ENCODE measurements at regions of chrX and their contacts with region 1.

Region 1: DNA sequence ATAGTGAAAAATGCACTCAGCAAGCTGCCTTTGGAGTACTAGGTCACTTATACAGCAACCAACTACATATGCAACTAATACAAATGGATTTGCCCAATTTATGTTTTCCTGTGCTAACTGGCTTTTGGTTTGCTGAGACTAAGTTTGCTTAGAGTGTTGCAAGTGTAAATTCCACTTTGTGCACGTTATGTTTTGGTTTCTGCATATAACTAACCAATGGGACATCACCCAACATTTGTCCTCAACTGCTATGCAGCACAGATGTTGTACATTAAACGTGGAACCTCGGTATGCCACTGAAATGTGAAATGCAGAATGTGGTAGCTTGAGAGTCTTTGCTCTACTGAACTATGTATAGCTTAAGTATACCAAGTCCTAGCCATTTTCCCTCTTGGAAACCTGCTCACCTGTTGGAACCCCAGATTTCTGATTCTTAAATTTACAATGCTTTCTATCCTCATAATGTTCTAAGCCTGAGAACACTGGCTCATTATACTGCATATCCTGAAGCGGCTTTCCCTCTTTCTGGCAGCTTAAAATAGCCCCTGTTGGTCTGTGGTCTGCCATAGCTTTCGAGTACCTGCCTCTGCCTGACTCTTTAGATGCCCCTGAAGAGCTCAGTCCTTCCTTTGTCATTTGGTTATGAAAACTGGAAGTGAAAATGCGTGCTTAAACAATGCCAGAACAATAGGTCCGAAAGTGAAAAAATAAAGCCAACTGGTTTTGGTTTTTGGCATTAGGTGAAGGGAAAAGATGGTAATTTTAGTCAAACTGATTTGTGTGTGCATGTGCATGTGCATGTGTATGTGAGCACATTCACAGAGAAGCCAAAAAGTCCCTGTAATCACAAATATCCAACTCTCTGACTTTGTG is 158.0 kb downstream of the SH2D1A start:
- DNase-seq: peak; percentile 36
- ATAC-seq: peak; percentile 96
- H3K4me3 ChIP-seq: no peak overlapping the region
- H3K27ac ChIP-seq: no peak overlapping the region
- H3K4me1 ChIP-seq: no peaks in the 10 kb centered on the region
- H3K27me3 ChIP-seq: no peaks in the 10 kb centered on the region; a peak in 1 of 4 replicates
- CTCF ChIP-seq: no peak
- EP300 ChIP-seq: peak in 1 of 2 experiments; percentile 60; a peak in 2 of 4 replicates
- POLR2A ChIP-seq: no peak
- RAD21 ChIP-seq: no peak

Region 2: GRCh38 chrX:124045109-124045508 is 459.2 kb before region 1 on chrX:
- CTCF ChIA-PET with region 1: no interaction called
- POLR2A ChIA-PET with region 1: no interaction called
- RAD21 ChIA-PET with region 1: no interaction called
- SMC1A ChIA-PET with region 1: no interaction called
- in situ Hi-C with region 1: no loop called
- intact Hi-C with region 1: no loop called
- DNase-seq: no peak
- ATAC-seq: no peak
- H3K4me3 ChIP-seq: no peak overlapping the region
- H3K27ac ChIP-seq: no peak overlapping the region
- H3K4me1 ChIP-seq: no peaks in the 10 kb centered on the region
- H3K27me3 ChIP-seq: no peaks in the 10 kb centered on the region
- CTCF ChIP-seq: no peak
- EP300 ChIP-seq: no peak
- POLR2A ChIP-seq: no peak
- RAD21 ChIP-seq: no peak

Region 3: DNA sequence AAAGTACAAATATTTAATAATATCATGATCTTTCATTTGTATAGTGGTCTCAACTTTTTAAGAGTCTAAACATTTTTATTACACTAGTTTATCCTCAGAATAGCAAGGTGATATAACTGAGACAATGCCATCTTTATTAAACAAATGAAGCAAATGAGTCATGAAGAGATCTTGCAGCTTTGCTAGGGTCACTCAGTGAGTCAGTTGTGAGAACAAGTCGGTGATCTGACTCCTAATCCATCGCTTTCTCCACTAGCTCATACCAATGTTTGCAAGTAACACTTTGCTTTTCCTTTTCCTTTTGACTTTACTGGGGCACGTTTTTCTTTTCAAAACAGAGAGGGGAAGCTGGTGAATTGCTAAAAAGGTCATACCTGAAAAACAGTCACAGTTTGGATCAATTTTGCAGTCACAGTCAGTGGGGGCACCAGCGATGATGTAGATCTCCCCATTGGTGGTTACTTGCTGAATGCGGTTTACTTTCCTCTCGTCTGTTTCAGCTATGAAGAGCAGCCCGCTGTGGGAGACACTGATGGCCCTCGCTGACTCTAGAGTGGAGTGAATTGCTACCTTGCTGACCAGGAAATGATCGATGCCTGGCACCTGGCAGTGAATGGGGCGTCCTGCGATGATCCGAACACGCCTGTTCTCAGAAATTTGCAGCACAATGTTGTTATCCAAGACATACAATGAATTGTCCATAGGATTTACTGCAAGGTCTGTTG is 82.3 kb before region 1 on chrX:
- CTCF ChIA-PET with region 1: no interaction called
- POLR2A ChIA-PET with region 1: no interaction called
- RAD21 ChIA-PET with region 1: no interaction called
- SMC1A ChIA-PET with region 1: no interaction called
- in situ Hi-C with region 1: no loop called
- intact Hi-C with region 1: no loop called
- DNase-seq: no peak
- ATAC-seq: no peak
- H3K4me3 ChIP-seq: no peak overlapping the region
- H3K27ac ChIP-seq: no peak overlapping the region
- H3K4me1 ChIP-seq: no peaks in the 10 kb centered on the region
- H3K27me3 ChIP-seq: no peaks in the 10 kb centered on the region
- CTCF ChIP-seq: no peak
- EP300 ChIP-seq: no peak
- POLR2A ChIP-seq: no peak
- RAD21 ChIP-seq: no peak

Region 4: GRCh38 chrX:124488412-124489161 is 15.8 kb before region 1 on chrX:
- CTCF ChIA-PET with region 1: interaction called, 6 read pairs
- POLR2A ChIA-PET with region 1: interaction called, 4 read pairs
- RAD21 ChIA-PET with region 1: interaction called, 16 read pairs
- SMC1A ChIA-PET with region 1: interaction called, 44 read pairs
- in situ Hi-C with region 1: no loop called
- intact Hi-C with region 1: no loop called
- DNase-seq: peak; percentile 32
- ATAC-seq: peak; percentile 93
- H3K4me3 ChIP-seq: no peak overlapping the region
- H3K27ac ChIP-seq: no peak overlapping the region
- H3K4me1 ChIP-seq: no peaks in the 10 kb centered on the region
- H3K27me3 ChIP-seq: no peaks in the 10 kb centered on the region
- CTCF ChIP-seq: no peak
- EP300 ChIP-seq: no peak
- POLR2A ChIP-seq: no peak
- RAD21 ChIP-seq: no peak

Region 5: DNA sequence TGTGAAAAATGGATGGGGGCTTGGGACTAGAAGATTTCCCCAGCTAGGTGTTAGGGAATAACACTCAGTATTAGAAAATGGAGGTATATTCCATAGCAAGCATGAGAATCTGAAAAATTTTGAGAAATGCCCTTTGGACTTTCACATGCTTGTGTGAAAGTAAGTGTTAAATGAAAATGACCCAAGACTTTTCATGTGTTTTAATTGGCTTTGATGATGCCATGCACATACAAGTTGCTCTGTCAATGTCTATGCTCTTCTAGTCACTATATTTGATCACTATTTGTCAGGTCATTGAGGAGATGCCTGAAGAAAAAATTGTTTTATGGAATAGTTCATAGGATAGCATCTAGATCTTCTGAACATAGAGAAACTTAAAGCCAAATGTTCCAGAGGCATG is 10.4 kb before region 1 on chrX:
- CTCF ChIA-PET with region 1: interaction called, 6 read pairs
- POLR2A ChIA-PET with region 1: interaction called, 4 read pairs
- RAD21 ChIA-PET with region 1: interaction called, 16 read pairs
- SMC1A ChIA-PET with region 1: interaction called, 44 read pairs
- in situ Hi-C with region 1: no loop called
- intact Hi-C with region 1: no loop called
- DNase-seq: no peak
- ATAC-seq: peak; percentile 52; the same call in 2 of the 3 replicates
- H3K4me3 ChIP-seq: no peak overlapping the region
- H3K27ac ChIP-seq: no peak overlapping the region
- H3K4me1 ChIP-seq: no peaks in the 10 kb centered on the region
- H3K27me3 ChIP-seq: no peaks in the 10 kb centered on the region
- CTCF ChIP-seq: no peak
- EP300 ChIP-seq: no peak
- POLR2A ChIP-seq: no peak
- RAD21 ChIP-seq: no peak

Region 6: GRCh38 chrX:124573468-124573867 is 69.1 kb after region 1 on chrX:
- CTCF ChIA-PET with region 1: no interaction called
- POLR2A ChIA-PET with region 1: no interaction called
- RAD21 ChIA-PET with region 1: no interaction called
- SMC1A ChIA-PET with region 1: no interaction called
- in situ Hi-C with region 1: no loop called
- intact Hi-C with region 1: no loop called
- DNase-seq: no peak
- ATAC-seq: no peak
- H3K4me3 ChIP-seq: no peak overlapping the region
- H3K27ac ChIP-seq: no peak overlapping the region
- H3K4me1 ChIP-seq: no peaks in the 10 kb centered on the region
- H3K27me3 ChIP-seq: no peaks in the 10 kb centered on the region
- CTCF ChIP-seq: no peak
- EP300 ChIP-seq: no peak
- POLR2A ChIP-seq: no peak
- RAD21 ChIP-seq: no peak

Region 7: GRCh38 chrX:124736553-124737240 is 232.3 kb after region 1 on chrX:
- CTCF ChIA-PET with region 1: no interaction called
- POLR2A ChIA-PET with region 1: no interaction called
- RAD21 ChIA-PET with region 1: no interaction called
- SMC1A ChIA-PET with region 1: no interaction called
- in situ Hi-C with region 1: no loop called
- intact Hi-C with region 1: no loop called
- DNase-seq: no peak
- ATAC-seq: no peak
- H3K4me3 ChIP-seq: no peak overlapping the region
- H3K27ac ChIP-seq: no peak overlapping the region
- H3K4me1 ChIP-seq: no peaks in the 10 kb centered on the region
- H3K27me3 ChIP-seq: no peaks in the 10 kb centered on the region
- CTCF ChIP-seq: no peak
- EP300 ChIP-seq: no peak
- POLR2A ChIP-seq: no peak
- RAD21 ChIP-seq: no peak

Measured in GM12878 (cell line).